ENCODE measurements at regions of chr22 and their contacts with region 1.

Region 1: DNA sequence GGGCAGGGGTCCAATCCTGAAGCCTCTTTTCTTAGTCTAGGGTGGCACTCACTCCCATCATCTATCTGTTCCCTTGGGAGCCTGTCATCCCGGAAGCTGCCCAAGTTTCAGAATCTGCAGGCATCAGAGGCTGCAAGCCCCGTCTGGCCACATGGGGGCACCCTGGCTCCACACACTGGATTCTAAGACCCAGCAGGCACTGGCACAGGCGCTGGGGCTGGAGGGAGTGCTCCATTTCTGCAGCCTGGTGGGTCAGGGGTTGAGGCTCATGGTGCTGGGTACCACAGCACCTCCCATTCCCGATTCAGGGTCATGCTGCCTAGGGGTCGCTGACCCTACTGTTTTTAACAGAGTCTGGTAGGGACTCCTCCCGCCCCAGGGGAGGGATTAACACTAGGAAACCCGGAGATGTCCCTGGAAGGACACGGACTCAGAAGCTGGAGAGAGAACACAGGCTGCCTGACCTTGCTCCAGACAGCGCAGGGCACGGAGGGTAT is 243.9 kb upstream of the SYN3 start:
- DNase-seq: peak; percentile 82 to 85
- ATAC-seq: peak; percentile 86 to 92 (median 90)
- H3K4me3 ChIP-seq: peak overlapping the region in 2 of 10 donors; percentile 3 to 16
- H3K27ac ChIP-seq: peak overlapping the region in 7 of 10 donors; percentile 6 to 72 (median 57)
- H3K4me1 ChIP-seq: peaks cover 5 to 35% (median 16%) of the 10 kb centered on the region in 9 donors
- H3K27me3 ChIP-seq: no peaks in the 10 kb centered on the region
- CTCF ChIP-seq: peak; percentile 90 to 98 (median 96)

Region 2: DNA sequence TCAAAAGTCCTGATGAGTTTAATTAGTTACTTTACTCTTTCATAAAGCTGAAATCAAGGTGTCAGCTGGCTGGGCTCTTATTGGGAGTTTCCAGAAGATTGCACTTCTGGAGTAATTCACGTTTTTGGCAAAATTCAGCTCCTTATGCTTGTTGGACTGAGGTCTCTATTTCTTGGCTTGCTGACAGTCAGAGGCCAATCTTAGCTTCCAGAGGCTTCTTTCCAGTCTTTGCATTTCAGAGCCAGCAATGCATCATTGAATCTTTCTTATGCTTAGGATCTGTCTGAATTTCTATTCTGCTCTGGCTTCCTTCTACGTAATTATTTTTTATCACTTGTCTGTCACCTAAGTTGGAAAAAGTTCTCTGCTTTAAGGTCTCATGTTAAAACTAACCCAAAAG is 152.5 kb before region 1 on chr22:
- intact Hi-C with region 1: no loop called
- DNase-seq: no peak
- ATAC-seq: no peak
- H3K4me3 ChIP-seq: no peak overlapping the region
- H3K27ac ChIP-seq: no peak overlapping the region
- H3K4me1 ChIP-seq: no peaks in the 10 kb centered on the region
- H3K27me3 ChIP-seq: no peaks in the 10 kb centered on the region
- CTCF ChIP-seq: no peak

Region 3: DNA sequence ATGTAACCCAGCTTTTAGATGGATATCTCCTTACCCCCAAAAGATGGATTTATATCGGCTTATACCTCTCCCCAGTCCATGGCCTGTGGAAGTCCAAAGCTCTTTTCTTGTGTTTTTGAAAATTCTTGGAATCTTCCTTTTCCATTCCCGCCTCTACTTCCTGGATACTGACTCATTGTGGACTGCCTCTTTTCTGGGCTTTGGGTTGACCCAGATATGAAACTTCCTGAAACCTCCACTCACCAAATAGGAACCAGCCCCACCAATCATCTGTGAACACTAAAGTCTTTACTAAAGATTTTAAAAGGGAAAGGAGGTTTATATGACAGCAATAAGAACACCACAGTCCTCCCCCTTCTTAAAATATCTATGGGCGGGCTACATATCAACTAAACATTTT is 80.5 kb before region 1 on chr22:
- intact Hi-C with region 1: no loop called
- DNase-seq: peak in 1 of 2 donors; percentile 5
- ATAC-seq: peak in 7 of 8 donors; percentile 47 to 80 (median 61)
- H3K4me3 ChIP-seq: peak overlapping the region in 6 of 10 donors; percentile 27 to 44 (median 36)
- H3K27ac ChIP-seq: peak overlapping the region in 5 of 10 donors; percentile 15 to 46 (median 20)
- H3K4me1 ChIP-seq: peaks cover 0 to 3% (median 0%) of the 10 kb centered on the region in 9 donors
- H3K27me3 ChIP-seq: no peaks in the 10 kb centered on the region
- CTCF ChIP-seq: no peak

Region 4: GRCh38 chr22:33350391-33350955 is 48.4 kb after region 1 on chr22:
- intact Hi-C with region 1: no loop called
- DNase-seq: no peak
- ATAC-seq: no peak
- H3K4me3 ChIP-seq: no peak overlapping the region
- H3K27ac ChIP-seq: no peak overlapping the region
- H3K4me1 ChIP-seq: peaks cover 0 to 18% (median 3%) of the 10 kb centered on the region in 9 donors
- H3K27me3 ChIP-seq: no peaks in the 10 kb centered on the region
- CTCF ChIP-seq: no peak

Region 5: DNA sequence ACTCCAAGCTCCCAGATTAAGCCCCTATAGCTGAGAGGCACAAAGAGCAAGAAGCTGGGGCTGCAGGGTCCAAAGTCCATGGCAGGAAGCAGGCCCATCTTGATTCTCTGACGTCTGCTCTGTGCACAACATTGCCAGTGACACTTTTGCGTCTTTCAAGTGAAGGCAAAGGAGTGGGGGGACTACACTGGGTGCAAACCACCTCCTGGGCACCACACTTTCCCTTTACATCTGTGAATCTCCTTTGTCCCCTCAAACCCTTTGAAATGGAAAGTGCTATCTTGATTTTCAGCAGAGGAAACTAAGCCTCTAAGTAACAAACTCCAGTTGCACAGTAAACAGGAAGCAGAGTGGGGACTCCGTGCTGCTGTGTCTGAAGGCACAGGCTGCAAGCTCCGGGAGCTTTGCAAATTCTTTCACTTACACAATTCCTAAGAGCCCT is 190.1 kb after region 1 on chr22:
- intact Hi-C with region 1: loop called in 1 of 10 experiments (anchors 10 kb)
- DNase-seq: no peak
- ATAC-seq: peak in 7 of 8 donors; percentile 25 to 85 (median 62)
- H3K4me3 ChIP-seq: peak overlapping the region in 6 of 10 donors; percentile 5 to 22 (median 12)
- H3K27ac ChIP-seq: peak overlapping the region in 8 of 10 donors; percentile 6 to 70 (median 42)
- H3K4me1 ChIP-seq: peaks cover 5 to 30% (median 16%) of the 10 kb centered on the region in 9 donors
- H3K27me3 ChIP-seq: no peaks in the 10 kb centered on the region
- CTCF ChIP-seq: no peak

Region 6: DNA sequence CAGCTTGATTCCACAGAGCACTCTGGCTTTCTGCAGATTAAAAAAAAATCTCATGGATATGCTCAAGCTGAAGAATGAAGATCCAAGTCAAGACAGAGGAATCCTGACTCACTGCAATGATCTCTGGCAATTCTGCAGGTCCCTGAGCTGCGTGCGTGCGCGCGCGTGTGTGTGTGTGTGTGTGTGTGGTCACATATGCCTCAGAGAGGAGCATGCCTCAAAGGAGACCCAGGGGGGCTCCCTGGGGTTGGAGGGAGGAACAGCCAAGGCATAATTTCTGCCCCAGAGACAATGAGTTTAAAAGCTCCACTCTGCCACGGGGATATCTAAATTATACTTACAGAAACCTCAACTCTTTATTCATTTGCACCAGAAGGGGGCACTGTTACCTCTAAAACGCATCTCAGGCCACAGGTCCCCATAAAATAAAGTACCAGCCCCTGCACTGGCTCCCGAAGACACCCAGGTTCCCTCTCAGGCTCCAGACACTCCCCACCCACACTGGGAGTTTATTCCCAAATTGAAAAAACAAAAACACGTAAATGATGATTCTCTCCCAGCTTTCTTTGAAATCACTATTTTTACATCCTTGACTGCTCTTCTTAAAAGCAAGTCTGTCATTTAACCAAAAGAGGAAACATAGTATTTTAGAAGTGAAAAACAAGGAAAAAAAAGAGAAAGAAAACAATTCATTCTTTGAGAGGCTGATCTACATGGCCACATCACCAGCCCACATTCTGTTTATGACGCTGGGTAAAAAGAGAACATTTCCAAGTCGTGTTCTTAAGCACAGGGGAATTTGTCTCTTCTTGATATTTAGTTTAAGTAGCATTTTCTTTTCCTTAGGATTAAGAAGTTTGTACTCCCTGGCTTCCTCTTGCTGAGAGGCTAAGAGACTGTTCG is 217.2 kb after region 1 on chr22:
- intact Hi-C with region 1: loop called in 6 of 10 experiments (anchors 5 to 10 kb)
- DNase-seq: peak in 1 of 2 donors; percentile 63
- ATAC-seq: peak; percentile 49 to 79 (median 62)
- H3K4me3 ChIP-seq: no peak overlapping the region
- H3K27ac ChIP-seq: no peak overlapping the region
- H3K4me1 ChIP-seq: peaks cover 2 to 42% (median 14%) of the 10 kb centered on the region in 9 donors
- H3K27me3 ChIP-seq: no peaks in the 10 kb centered on the region
- CTCF ChIP-seq: peak; percentile 55 to 81 (median 69)

Region 7: DNA sequence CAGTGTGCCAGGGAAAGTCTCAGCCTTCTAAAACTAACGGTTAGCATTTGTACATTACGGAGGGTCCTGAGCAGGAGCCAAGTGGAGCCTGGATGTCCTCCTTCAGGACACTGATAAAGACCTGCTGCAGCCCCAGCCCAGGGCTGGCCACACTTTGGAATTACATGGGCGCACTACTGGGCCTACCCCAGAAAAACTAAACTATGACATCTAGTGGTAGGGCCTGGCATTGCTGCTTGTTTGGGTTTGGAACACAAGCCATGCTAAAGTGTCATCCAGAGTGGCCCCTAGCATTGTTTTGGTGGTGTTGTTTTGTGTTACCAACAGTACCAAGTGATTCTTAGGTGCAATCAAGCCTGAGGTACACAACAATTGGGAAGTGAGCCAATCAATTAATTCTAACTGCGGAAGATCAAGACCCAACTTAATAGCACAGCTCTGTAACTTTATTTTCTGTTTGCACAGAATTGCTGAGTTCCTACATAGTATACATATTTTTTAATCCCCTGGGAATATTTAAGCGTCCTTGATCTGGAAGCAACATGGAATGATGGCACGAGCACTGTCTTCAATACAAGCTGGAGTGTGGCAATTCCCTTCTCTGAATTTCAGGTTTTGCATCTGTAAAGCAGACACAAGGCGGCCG is 277.5 kb after region 1 on chr22:
- intact Hi-C with region 1: loop called (anchors 1 to 10 kb)
- DNase-seq: peak; percentile 41 to 75
- ATAC-seq: peak; percentile 88 to 94 (median 92)
- H3K4me3 ChIP-seq: no peak overlapping the region
- H3K27ac ChIP-seq: no peak overlapping the region
- H3K4me1 ChIP-seq: peaks cover 7 to 42% (median 24%) of the 10 kb centered on the region in 9 donors
- H3K27me3 ChIP-seq: no peaks in the 10 kb centered on the region
- CTCF ChIP-seq: peak; percentile 78 to 96 (median 93)

Region 8: GRCh38 chr22:34105461-34106062 is 803.5 kb after region 1 on chr22:
- intact Hi-C with region 1: loop called in 9 of 10 experiments (anchors 5 to 10 kb)
- DNase-seq: peak; percentile 43 to 54
- ATAC-seq: peak in 5 of 8 donors; percentile 62 to 83 (median 70)
- H3K4me3 ChIP-seq: no peak overlapping the region
- H3K27ac ChIP-seq: no peak overlapping the region
- H3K4me1 ChIP-seq: no peaks in the 10 kb centered on the region
- H3K27me3 ChIP-seq: peaks cover 0 to 26% (median 8%) of the 10 kb centered on the region in 7 donors
- CTCF ChIP-seq: peak; percentile 35 to 75 (median 69)

Region 9: GRCh38 chr22:35023692-35024363 is 1721.7 kb after region 1 on chr22:
- intact Hi-C with region 1: loop called in 1 of 10 experiments (anchors 10 kb)
- DNase-seq: peak; percentile 45 to 73
- ATAC-seq: peak in 5 of 8 donors; percentile 51 to 75 (median 54)
- H3K4me3 ChIP-seq: no peak overlapping the region
- H3K27ac ChIP-seq: no peak overlapping the region
- H3K4me1 ChIP-seq: no peaks in the 10 kb centered on the region
- H3K27me3 ChIP-seq: peaks cover 5 to 55% (median 28%) of the 10 kb centered on the region in 7 donors
- CTCF ChIP-seq: peak; percentile 70 to 90 (median 87)